ENCODE measurements at regions of chr1 and their contacts with region 1.

Region 1: GRCh38 chr1:43991476-43992231 is at the start of gene CCDC24:
- H3K4me3 Mint-ChIP-seq: peak within 1 kb of the TSS; percentile 92
- H3K27ac Mint-ChIP-seq: peak within 1 kb of the TSS; percentile 83
- H3K4me1 Mint-ChIP-seq: peaks cover 29% of the 10 kb centered on the region
- H3K27me3 Mint-ChIP-seq: peaks cover 9% of the 10 kb centered on the region

Region 2: GRCh38 chr1:43405219-43405875 is 586.3 kb before region 1 on chr1:
- intact Hi-C with region 1: no loop called
- H3K4me3 Mint-ChIP-seq: no peak overlapping the region
- H3K27ac Mint-ChIP-seq: no peak overlapping the region
- H3K4me1 Mint-ChIP-seq: peaks cover 16% of the 10 kb centered on the region
- H3K27me3 Mint-ChIP-seq: no peaks in the 10 kb centered on the region

Region 3: DNA sequence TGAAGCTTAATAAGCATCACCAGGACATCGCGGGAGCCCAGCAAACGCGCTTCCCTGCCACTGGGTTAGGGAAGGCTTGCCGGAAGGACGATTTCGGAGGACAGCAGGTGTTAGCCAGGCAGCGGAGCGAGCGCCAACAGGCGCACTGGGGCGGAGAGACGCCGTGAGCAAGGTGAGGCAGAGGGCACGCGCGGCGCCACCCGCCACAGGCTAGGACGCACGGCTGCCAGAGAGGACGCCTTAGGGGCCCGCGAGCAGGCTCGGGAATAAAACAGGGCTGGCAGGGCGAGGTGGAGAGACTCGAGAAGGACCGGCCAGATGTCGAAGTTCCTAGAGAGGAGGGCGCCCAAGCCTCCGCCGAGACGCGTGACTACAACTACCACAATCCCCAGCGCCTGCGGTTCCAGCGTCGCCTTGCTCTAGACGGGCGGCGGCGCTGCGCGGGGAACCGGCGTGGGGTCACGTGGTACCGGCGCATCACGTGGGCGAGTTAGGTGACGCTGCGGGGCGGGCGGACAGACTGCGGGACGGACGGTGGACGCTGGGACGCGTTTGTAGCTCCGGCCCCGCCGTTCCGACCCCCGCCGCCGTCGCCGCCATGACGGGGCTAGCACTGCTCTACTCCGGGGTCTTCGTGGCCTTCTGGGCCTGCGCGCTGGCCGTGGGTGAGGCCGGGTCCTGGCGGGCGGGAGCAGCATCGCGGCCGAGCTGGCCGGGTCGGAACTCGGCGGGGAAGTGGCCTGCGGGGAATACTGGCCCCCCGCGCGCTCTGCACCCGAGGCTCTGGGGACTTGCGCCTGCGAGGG is 17.0 kb before region 1 on chr1 and contains the start of gene ATP6V0B:
- intact Hi-C with region 1: loop called (anchors 2 kb)
- H3K4me3 Mint-ChIP-seq: peak within 1 kb of the TSS; percentile 86
- H3K27ac Mint-ChIP-seq: peak within 1 kb of the TSS; percentile 86
- H3K4me1 Mint-ChIP-seq: peaks cover 65% of the 10 kb centered on the region
- H3K27me3 Mint-ChIP-seq: no peaks in the 10 kb centered on the region